WTC11 (cell line): ENCODE measurements at regions of chr14 and their contacts with region 1.

Region 1: DNA sequence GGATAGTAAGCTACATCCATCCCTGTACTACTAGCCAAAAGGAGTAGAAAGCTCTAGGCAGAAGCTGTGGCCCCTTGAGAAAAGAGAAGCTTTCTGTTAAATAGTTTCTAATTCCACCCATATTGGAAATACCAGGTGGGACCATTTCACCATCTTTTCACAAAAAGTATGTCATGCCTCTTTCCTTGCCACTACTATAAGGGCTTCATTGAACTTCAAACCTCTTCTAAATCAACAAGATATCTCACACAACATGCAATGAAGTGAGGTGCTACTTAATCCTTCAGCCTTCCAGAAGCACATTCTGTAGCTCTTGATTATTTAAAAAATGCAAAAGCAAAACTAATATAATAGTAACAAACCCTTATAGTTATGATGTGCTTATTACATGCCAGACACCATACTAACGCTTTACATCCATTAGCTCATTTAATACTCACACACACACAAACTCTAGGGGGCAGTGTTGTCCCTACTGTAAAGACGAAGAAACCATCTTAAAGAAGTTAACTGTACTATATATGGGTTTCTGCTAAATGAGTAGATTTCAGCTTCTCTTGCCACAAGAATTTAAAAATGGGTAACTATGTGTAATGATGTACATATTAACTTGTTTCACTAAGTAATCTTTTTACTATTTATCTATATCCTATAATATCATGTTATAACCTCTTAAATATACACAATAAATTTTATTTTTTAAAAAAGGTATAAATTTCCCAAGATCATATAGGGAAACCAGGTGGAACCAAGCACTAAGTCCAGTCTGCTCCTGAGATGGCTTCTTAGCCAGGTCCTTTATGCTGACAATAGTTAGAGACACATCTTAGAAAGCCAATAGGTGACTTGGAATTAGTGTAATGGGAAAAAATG is 124.4 kb downstream of the RPS29 start:
- DNase-seq: peak; percentile 31
- ATAC-seq: peak; percentile 72
- H3K4me3 Mint-ChIP-seq: no peak overlapping the region
- H3K27ac Mint-ChIP-seq: no peak overlapping the region
- H3K4me1 Mint-ChIP-seq: peaks cover 21% of the 10 kb centered on the region
- H3K27me3 Mint-ChIP-seq: no peaks in the 10 kb centered on the region
- CTCF ChIP-seq: peak; percentile 43; the same call in 1 of the 2 replicates

Region 2: GRCh38 chr14:49249022-49249421 is 212.7 kb before region 1 on chr14:
- CTCF ChIA-PET with region 1: no interaction called
- POLR2A ChIA-PET with region 1: no interaction called
- DNase-seq: no peak
- ATAC-seq: no peak
- H3K4me3 Mint-ChIP-seq: no peak overlapping the region
- H3K27ac Mint-ChIP-seq: no peak overlapping the region
- H3K4me1 Mint-ChIP-seq: 0 out of 2 replicates have a peak, but pooled peaks cover 6% of the 10 kb centered on the region
- H3K27me3 Mint-ChIP-seq: no peaks in the 10 kb centered on the region
- CTCF ChIP-seq: no peak

Region 3: DNA sequence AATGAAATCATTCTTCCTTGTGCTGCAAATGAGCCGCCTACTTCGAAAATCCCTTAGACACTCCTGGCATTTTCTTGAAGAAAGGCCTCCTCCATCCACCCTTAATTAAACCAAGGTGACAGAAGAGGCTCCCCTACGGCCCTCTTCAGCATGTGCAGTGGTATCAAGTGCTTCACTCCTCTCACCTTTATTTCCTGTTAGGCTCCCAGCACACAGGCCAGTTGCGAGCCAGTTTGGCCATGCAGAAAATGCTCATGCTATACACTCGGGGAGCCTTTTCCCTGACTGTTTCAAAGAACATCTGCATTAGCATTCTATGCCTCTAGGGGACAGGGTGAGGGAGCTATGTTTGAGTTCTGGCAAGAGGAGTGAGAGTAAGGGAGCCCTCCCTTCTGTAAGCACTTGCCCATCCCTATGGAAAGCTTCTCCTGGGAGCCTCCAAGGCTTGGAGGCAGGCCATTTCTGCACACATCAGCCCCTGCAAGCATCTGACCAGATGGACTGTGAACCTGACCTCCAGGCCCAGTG is 167.1 kb before region 1 on chr14:
- CTCF ChIA-PET with region 1: no interaction called
- POLR2A ChIA-PET with region 1: no interaction called
- DNase-seq: no peak
- ATAC-seq: peak; percentile 92
- H3K4me3 Mint-ChIP-seq: no peak overlapping the region
- H3K27ac Mint-ChIP-seq: no peak overlapping the region
- H3K4me1 Mint-ChIP-seq: peaks cover 9% of the 10 kb centered on the region
- H3K27me3 Mint-ChIP-seq: no peaks in the 10 kb centered on the region
- CTCF ChIP-seq: no peak

Region 4: GRCh38 chr14:49427117-49427516 is 34.6 kb before region 1 on chr14:
- CTCF ChIA-PET with region 1: interaction called, 13 read pairs
- POLR2A ChIA-PET with region 1: no interaction called
- DNase-seq: no peak
- ATAC-seq: peak; percentile 77
- H3K4me3 Mint-ChIP-seq: no peak overlapping the region
- H3K27ac Mint-ChIP-seq: no peak overlapping the region
- H3K4me1 Mint-ChIP-seq: peaks cover 9% of the 10 kb centered on the region
- H3K27me3 Mint-ChIP-seq: no peaks in the 10 kb centered on the region; the same call in 1 of the 2 replicates
- CTCF ChIP-seq: no peak

Region 5: DNA sequence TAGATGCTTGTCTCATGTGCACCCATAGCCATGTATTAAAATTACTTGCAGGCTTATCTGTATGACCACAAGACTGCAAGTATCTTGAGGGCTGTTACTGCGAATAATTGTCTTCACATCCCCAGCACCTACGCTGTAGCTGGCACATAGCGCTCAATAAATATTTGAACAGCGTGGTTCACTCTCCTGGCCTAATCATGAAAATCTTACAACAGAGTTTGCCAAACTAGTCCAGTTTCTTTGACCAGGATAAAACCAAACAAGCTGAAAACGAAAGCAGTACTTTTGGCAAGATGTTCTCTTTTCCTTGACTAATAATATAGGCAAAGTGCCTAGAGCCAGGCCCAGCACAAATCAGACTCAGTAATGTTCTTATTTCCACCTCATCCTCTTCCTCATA is 17.7 kb after region 1 on chr14:
- CTCF ChIA-PET with region 1: interaction called, 52 read pairs
- POLR2A ChIA-PET with region 1: no interaction called
- DNase-seq: no peak
- ATAC-seq: no peak
- H3K4me3 Mint-ChIP-seq: no peak overlapping the region
- H3K27ac Mint-ChIP-seq: no peak overlapping the region
- H3K4me1 Mint-ChIP-seq: peaks cover 13% of the 10 kb centered on the region
- H3K27me3 Mint-ChIP-seq: no peaks in the 10 kb centered on the region
- CTCF ChIP-seq: no peak

Region 6: DNA sequence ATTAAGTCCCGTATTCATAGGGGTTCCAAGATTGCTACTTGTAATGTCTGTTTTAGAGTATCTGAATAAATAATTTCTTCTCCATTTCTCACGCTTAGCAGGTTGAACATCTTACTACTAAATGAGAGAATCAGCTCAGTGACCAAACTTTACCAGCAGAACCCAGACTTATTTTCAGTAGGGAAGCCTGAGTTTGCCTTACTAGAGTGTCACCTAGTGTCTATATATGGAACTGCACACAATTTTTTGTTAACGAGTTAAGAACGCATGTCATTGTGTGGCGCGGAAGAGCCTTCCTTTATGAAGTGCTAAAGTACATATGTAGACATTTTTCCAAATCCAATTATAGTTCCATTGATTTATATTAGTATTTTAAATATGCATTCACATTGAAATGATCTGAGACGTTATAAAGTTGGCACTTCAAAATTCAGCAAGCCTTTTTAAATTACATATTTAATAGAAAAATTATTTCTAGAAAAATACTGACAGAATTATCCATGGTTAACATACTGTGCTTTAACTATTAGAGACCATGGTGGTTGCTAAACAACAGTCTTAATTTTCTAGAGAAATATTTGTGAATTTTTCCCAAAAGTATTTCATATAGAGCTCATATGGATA is 36.1 kb after region 1 on chr14:
- CTCF ChIA-PET with region 1: interaction called, 126 read pairs
- POLR2A ChIA-PET with region 1: no interaction called
- DNase-seq: no peak
- ATAC-seq: peak; percentile 63
- H3K4me3 Mint-ChIP-seq: no peak overlapping the region
- H3K27ac Mint-ChIP-seq: no peak overlapping the region
- H3K4me1 Mint-ChIP-seq: peaks cover 17% of the 10 kb centered on the region
- H3K27me3 Mint-ChIP-seq: no peaks in the 10 kb centered on the region; the same call in none of the 2 replicates
- CTCF ChIP-seq: peak; percentile 84

Region 7: GRCh38 chr14:49550286-49551184 is 88.8 kb after region 1 on chr14:
- CTCF ChIA-PET with region 1: interaction called, 76 read pairs
- POLR2A ChIA-PET with region 1: interaction called, 3 read pairs
- DNase-seq: no peak
- ATAC-seq: peak; percentile 24; the same call in 1 of the 2 replicates
- H3K4me3 Mint-ChIP-seq: peak overlapping the region; percentile 33; the same call in 1 of the 2 replicates
- H3K27ac Mint-ChIP-seq: no peak overlapping the region
- H3K4me1 Mint-ChIP-seq: peaks cover 41% of the 10 kb centered on the region
- H3K27me3 Mint-ChIP-seq: no peaks in the 10 kb centered on the region; the same call in 1 of the 2 replicates
- CTCF ChIP-seq: no peak